ENCODE measurements at regions of chr6 and their contacts with region 1.

Region 1: GRCh38 chr6:32838114-32838958 is at the start of gene TAP2:
- DNase-seq: peak; percentile 97
- H3K4me3 Mint-ChIP-seq: peak within 1 kb of the TSS; percentile 89
- H3K27ac Mint-ChIP-seq: peak within 1 kb of the TSS; percentile 100
- H3K4me1 Mint-ChIP-seq: peaks cover 84% of the 10 kb centered on the region
- H3K27me3 Mint-ChIP-seq: no peaks in the 10 kb centered on the region
- total RNA-seq, gene TAP2: 332 to 337 TPM

Region 2: DNA sequence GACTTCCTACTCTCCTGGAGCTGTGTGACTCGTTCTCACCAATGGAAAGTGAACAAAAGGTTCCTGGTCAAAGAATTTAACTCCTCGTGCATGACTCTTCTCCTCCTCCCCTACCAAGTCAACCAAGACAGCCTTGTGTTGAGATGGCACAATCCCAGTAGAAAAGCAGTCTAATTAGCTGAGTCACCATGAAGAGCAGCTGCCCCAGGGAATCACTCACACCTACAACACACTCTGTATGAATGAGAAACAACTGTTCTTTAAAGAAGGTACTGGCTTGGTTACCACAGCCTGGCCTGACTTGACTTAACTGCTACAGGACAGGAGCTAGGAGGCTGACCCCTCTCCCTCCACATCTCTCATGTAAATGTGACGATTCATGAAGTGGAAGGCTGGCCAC is 18.6 kb before region 1 on chr6:
- CTCF ChIA-PET with region 1: interaction called, 18 read pairs
- POLR2A ChIA-PET with region 1: interaction called, 7 read pairs
- DNase-seq: no peak
- H3K4me3 Mint-ChIP-seq: no peak overlapping the region
- H3K27ac Mint-ChIP-seq: no peak overlapping the region
- H3K4me1 Mint-ChIP-seq: peaks cover 7% of the 10 kb centered on the region
- H3K27me3 Mint-ChIP-seq: no peaks in the 10 kb centered on the region

Region 3: DNA sequence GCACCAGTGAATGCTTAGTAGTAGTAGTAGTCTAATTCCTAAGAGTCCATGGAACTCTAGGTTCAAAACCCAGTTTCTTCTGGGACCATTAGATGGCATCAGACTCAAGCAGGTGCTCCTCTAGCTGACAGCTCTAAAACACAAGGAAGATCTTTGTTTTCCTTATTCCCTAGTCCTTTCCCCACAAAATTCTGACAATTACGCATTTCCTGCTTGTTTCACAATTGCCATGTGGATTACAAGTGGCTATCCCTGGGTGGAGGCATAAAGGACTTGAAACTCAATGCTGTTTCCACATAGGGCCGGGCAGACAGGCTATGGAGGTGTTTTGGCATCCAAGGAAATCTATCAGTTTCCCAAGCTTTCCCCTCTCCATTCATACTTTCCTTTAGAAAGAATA is 12.4 kb before region 1 on chr6:
- CTCF ChIA-PET with region 1: interaction called, 39 read pairs
- POLR2A ChIA-PET with region 1: interaction called, 7 read pairs
- DNase-seq: no peak
- H3K4me3 Mint-ChIP-seq: no peak overlapping the region
- H3K27ac Mint-ChIP-seq: no peak overlapping the region
- H3K4me1 Mint-ChIP-seq: peaks cover 29% of the 10 kb centered on the region
- H3K27me3 Mint-ChIP-seq: no peaks in the 10 kb centered on the region

Region 4: GRCh38 chr6:32853541-32854375 is 15.4 kb after region 1 on chr6 and contains the starts of genes PSMB9 and TAP1:
- CTCF ChIA-PET with region 1: interaction called, 171 read pairs
- POLR2A ChIA-PET with region 1: interaction called, 37 read pairs
- DNase-seq: peak; percentile 97
- H3K4me3 Mint-ChIP-seq: peak within 1 kb of the TSS; percentile 98
- H3K27ac Mint-ChIP-seq: peak within 1 kb of the TSS; percentile 100
- H3K4me1 Mint-ChIP-seq: peaks cover 62% of the 10 kb centered on the region
- H3K27me3 Mint-ChIP-seq: no peaks in the 10 kb centered on the region
- total RNA-seq, gene PSMB9: 329 to 391 TPM
- total RNA-seq, gene TAP1: 396 to 441 TPM

Region 5: DNA sequence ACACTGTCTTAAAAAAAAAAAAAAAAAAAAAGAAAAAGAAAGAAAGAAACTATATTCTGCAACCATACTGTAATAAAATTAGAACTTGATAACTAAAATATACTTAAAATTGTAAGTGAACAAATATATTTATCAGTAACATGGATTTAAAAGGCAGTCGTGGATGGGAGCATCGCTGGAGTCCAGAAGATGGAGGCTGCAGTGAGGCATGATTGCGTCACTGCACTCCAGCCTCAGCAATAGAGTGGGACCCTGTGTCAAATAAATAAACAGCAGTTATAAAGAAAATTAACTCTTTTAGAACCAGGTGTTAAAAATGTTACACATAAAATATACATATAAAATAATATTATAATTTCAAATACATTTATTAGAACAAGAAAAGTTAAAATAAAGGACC is 24.4 kb after region 1 on chr6:
- CTCF ChIA-PET with region 1: interaction called, 171 read pairs
- POLR2A ChIA-PET with region 1: interaction called, 19 read pairs
- DNase-seq: no peak
- H3K4me3 Mint-ChIP-seq: no peak overlapping the region
- H3K27ac Mint-ChIP-seq: no peak overlapping the region
- H3K4me1 Mint-ChIP-seq: peaks cover 60% of the 10 kb centered on the region
- H3K27me3 Mint-ChIP-seq: no peaks in the 10 kb centered on the region

Region 6: DNA sequence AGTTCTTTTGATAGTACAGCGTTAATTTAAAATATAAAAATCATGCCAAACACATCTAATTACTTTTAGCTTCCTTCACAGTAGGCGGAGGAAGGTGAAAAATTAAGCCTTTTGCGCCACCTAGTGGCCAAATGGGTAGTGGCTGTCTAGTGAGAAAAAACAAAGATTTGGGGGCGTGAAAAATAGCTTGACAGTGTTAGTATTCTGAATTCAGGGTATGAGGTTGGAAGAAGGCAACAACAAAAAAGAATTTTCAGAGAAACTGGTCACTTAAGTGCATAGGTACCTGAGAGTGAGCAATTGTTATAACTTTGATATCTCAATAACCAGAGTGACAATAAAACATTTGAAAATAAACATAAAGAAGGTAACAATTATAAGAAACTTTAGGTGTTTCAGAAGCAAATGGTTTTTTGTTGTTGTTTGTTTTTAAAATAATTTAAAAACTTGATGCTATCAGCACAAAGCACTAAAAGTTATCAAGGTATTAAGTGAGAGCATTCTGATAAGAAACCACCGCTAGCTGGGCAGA is 30.0 kb after region 1 on chr6:
- CTCF ChIA-PET with region 1: interaction called, 97 read pairs
- POLR2A ChIA-PET with region 1: interaction called, 19 read pairs
- DNase-seq: peak; percentile 92
- H3K4me3 Mint-ChIP-seq: no peak overlapping the region
- H3K27ac Mint-ChIP-seq: no peak overlapping the region
- H3K4me1 Mint-ChIP-seq: peaks cover 39% of the 10 kb centered on the region
- H3K27me3 Mint-ChIP-seq: peaks cover 14% of the 10 kb centered on the region

Region 7: DNA sequence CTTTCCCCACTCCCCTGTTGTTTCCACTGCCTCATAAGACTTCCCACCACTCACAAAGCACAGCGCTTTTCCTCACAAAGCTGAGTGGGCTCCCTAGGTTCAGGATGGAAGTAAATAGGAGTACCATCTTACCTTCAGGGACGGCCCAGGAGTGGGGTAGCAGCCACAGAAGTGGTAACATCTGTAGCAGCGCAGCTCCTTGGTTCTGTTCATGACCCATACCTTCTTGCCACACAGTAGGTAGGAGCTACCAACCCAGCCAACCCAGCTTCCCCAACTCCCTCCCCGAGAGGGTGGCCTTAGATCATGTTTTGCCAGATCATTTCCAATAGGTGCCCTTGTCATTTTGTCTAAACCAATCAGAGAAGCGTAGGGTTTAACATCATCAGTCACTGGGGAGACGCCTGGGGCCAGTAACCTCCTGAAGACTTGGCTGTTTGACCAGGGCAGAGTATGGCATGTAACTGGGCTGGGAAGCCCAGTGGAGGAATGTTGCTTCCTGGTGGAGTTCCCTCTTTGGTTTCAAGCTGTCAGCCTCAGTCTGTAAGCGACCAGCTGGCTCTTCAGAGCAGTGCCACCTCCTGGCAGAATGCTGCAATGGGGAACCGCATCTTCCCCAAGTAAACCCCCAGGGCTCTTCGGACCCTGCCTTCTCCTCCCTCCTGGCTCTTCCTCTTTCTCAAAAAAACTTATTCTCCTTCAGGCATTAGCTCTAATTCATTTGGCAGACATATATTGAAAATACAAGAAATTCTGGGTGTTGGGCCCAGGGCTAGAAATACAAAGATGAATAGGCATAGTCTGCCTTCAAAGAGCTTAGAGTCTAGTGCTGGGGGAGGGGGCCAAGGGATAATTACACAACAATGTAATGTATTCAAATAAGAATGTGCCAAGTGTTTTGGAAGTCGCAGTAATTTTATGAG is 114.7 kb after region 1 on chr6 and contains the start of gene HLA-DMA:
- CTCF ChIA-PET with region 1: interaction called, 15 read pairs
- POLR2A ChIA-PET with region 1: no interaction called
- DNase-seq: peak; percentile 85
- H3K4me3 Mint-ChIP-seq: peak within 1 kb of the TSS; percentile 72
- H3K27ac Mint-ChIP-seq: peak within 1 kb of the TSS; percentile 82
- H3K4me1 Mint-ChIP-seq: peaks cover 54% of the 10 kb centered on the region
- H3K27me3 Mint-ChIP-seq: no peaks in the 10 kb centered on the region
- total RNA-seq, gene HLA-DMA: 24.0 to 26.8 TPM

Measured in activated CD4-positive, alpha-beta T cell treated with anti-CD3 and anti-CD28 coated beads, Interleukin-2, amount 10 ng/mL, durations not matched to agents 7 days and 5 days (primary cell).